ENCODE measurements at regions of chr9 and their contacts with region 1.

Region 1: DNA sequence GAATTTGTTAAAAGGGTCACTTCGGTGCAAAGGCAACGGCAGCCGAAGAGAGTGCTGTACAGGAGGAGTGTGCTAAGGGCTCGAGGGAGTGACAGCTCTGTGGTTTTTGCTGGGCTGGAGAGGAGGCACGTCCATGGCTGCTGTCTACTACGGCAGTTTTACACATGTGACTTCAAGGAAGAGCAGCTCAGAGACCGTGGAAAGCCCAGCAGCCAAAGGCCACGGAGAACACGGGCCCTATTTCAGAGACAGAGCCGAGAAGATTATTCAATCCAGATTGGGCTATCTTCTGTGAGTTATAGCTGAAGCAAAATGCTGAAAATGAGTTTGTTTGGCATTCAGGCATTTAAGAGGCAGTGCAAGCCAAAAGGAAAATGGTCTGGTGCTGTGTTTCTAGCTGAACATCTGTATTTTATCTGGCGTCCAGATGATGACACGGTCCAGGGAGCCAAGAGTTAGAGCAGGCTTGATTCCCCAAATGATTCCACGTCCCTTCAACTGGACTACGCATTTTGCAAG is 96.4 kb downstream of the RFK start:
- DNase-seq: no peak
- ATAC-seq: peak in 3 of 4 donors; percentile 57 to 73 (median 67)
- H3K4me3 ChIP-seq: no peak overlapping the region
- H3K27ac ChIP-seq: no peak overlapping the region
- H3K4me1 ChIP-seq: peaks cover 0 to 3% (median 0%) of the 10 kb centered on the region in 3 donors
- H3K27me3 ChIP-seq: no peaks in the 10 kb centered on the region
- CTCF ChIP-seq: no peak

Region 2: GRCh38 chr9:75866273-75866871 is 431.4 kb before region 1 on chr9:
- intact Hi-C with region 1: loop called in 1 of 3 experiments (anchors 10 kb)
- DNase-seq: peak in 3 of 6 donors; percentile 12 to 44 (median 19)
- ATAC-seq: peak; percentile 53 to 73 (median 64)
- H3K4me3 ChIP-seq: no peak overlapping the region
- H3K27ac ChIP-seq: no peak overlapping the region
- H3K4me1 ChIP-seq: peaks cover 4 to 8% (median 6%) of the 10 kb centered on the region in 3 donors
- H3K27me3 ChIP-seq: no peaks in the 10 kb centered on the region
- CTCF ChIP-seq: peak; percentile 38 to 71 (median 66)

Region 3: DNA sequence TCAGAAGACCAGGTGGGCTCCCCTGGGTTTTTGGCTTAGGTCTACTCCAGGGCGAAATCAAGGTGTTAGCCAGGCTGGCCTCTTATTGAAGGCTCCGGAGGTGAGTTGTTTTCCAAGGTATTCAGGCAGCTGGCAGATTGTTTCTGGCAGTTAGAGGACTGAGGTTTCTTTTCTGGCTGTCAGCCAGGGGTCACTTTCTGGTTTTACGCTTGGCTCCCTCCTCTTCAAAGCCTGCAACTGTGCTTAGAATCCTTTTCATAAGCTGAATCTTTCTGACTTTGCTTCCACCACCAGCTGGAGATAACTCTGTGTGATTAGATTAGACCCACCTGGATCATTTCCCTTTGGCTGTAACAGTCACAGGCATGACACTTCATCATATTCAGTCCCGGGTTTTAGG is 71.8 kb after region 1 on chr9:
- intact Hi-C with region 1: no loop called
- DNase-seq: peak in 4 of 6 donors; percentile 59 to 80 (median 73)
- ATAC-seq: peak; percentile 24 to 65 (median 60)
- H3K4me3 ChIP-seq: no peak overlapping the region
- H3K27ac ChIP-seq: peak overlapping the region; percentile 37 to 79 (median 65)
- H3K4me1 ChIP-seq: peaks cover 37 to 51% (median 45%) of the 10 kb centered on the region in 3 donors
- H3K27me3 ChIP-seq: no peaks in the 10 kb centered on the region
- CTCF ChIP-seq: no peak